Left cardiac atrium (tissue), 4 donors: ENCODE measurements at regions of chr11 and their contacts with region 1.

Region 1: DNA sequence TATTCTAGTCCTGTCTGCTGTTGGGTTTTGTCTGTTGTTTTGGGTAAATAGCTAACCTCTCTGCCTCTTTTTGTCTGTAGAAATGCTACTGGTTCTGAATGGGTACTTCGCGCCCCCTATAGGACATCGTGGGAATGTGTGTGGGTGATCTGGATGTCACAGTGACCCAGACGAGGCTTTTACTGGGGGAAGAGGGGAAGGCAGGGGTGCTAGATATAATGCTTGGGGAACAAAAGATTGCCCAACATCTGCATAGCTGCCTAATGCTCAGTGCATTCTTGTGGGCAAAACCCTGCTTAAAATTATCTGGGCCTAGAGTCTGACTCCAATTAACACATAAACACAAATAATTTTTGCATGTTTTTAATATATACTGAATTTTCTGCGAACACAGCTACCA is 57.7 kb downstream of the BMAL1 start:
- DNase-seq: peak; percentile 55
- ATAC-seq: peak; percentile 27 to 39

Region 2: DNA sequence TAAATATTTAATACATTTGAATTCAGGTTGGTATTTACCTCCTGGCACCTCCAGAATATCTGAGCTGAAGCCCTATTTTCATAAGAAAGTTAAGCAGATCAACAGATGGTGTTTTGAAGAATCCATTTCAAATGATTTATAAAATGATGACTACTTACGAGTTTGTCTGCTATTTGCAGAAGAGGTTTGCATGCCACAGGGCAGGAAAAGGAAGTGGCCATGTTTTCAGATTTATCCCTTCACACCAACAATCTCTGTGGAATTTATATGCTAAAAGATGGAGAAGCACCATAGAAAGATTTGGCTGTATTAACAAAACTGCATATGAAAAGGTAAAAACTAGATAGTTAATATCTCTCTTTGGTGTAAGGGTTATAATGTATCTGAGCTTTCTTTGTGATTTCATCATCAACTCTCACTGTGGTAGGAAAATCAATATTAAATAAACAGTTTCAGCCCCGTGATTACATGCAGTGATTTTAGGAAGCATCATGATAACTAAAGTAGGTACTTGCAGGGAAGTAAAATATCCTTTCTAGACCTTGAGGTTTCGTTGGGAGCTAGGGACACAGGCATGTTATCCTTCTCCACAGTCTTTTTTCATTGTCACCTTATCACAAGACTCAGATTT is 55.1 kb before region 1 on chr11:
- intact Hi-C with region 1: loop called (anchors 5 to 10 kb)
- DNase-seq: no peak
- ATAC-seq: no peak

Region 3: DNA sequence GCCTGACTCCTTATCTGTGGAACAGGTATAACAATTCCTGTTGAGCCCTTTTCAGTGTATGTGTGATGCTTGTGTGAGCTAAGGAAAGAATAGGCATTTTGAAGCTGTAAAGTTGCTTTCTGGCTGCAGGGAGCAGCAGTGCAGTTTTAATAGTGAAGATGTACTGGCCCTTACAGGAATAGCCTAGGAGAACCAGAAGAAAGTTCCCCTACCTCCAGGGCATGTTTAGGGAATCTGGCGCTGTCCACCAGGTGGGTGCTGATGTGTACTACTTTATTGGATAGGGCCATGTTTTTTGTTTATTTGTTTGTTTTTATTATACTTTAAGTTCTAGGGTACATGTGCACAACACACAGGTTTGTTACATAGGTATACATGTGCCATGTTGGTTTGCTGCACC is 46.2 kb before region 1 on chr11:
- intact Hi-C with region 1: loop called (anchors 5 to 10 kb)
- DNase-seq: no peak
- ATAC-seq: no peak